ENCODE measurements at regions of chr10 and their contacts with region 1.

Region 1: GRCh38 chr10:109894516-109894915 is 28.8 kb downstream of the XPNPEP1 start:
- DNase-seq: no peak
- H3K4me3 ChIP-seq: no peak overlapping the region
- H3K27ac ChIP-seq: peak overlapping the region; percentile 71 to 84 (median 76)
- H3K4me1 ChIP-seq: peaks cover 36 to 97% (median 71%) of the 10 kb centered on the region in 3 donors
- H3K27me3 ChIP-seq: no peaks in the 10 kb centered on the region
- CTCF ChIP-seq: no peak
- POLR2A ChIP-seq: no peak

Region 2: GRCh38 chr10:110007701-110008517 is 113.4 kb after region 1 on chr10 and contains the start of gene ADD3:
- intact Hi-C with region 1: loop called (anchors 10 kb)
- DNase-seq: peak; percentile 76
- H3K4me3 ChIP-seq: peak within 1 kb of the TSS; percentile 86 to 96 (median 90)
- H3K27ac ChIP-seq: peak within 1 kb of the TSS; percentile 85 to 95 (median 94)
- H3K4me1 ChIP-seq: peaks cover 13 to 91% (median 21%) of the 10 kb centered on the region in 3 donors
- H3K27me3 ChIP-seq: no peaks in the 10 kb centered on the region
- CTCF ChIP-seq: no peak
- POLR2A ChIP-seq: peak in 2 of 4 donors; percentile 60 to 63
- total RNA-seq, gene ADD3: 52.5 to 214 (median 145) TPM